Prostate gland (tissue), 2 donors: ENCODE measurements at regions of chr9 and their contacts with region 1.

Region 1: GRCh38 chr9:114155263-114155972 is at the start of gene COL27A1:
- DNase-seq: peak; percentile 78
- H3K4me3 ChIP-seq: peak within 1 kb of the TSS; percentile 49 to 50
- H3K27ac ChIP-seq: peak within 1 kb of the TSS; percentile 67 to 71
- H3K4me1 ChIP-seq: no peaks in the 10 kb centered on the region
- H3K27me3 ChIP-seq: no peaks in the 10 kb centered on the region
- CTCF ChIP-seq: peak; percentile 89 to 92 (median 90)
- POLR2A ChIP-seq: peak; percentile 31
- total RNA-seq, gene COL27A1: 8.7 to 54.8 TPM

Region 2: GRCh38 chr9:113906411-113907110 is 248.9 kb before region 1 on chr9:
- intact Hi-C with region 1: no loop called
- DNase-seq: peak; percentile 42
- H3K4me3 ChIP-seq: no peak overlapping the region
- H3K27ac ChIP-seq: no peak overlapping the region
- H3K4me1 ChIP-seq: peaks cover 4% of the 10 kb centered on the region
- H3K27me3 ChIP-seq: no peaks in the 10 kb centered on the region
- CTCF ChIP-seq: no peak
- POLR2A ChIP-seq: no peak

Region 3: DNA sequence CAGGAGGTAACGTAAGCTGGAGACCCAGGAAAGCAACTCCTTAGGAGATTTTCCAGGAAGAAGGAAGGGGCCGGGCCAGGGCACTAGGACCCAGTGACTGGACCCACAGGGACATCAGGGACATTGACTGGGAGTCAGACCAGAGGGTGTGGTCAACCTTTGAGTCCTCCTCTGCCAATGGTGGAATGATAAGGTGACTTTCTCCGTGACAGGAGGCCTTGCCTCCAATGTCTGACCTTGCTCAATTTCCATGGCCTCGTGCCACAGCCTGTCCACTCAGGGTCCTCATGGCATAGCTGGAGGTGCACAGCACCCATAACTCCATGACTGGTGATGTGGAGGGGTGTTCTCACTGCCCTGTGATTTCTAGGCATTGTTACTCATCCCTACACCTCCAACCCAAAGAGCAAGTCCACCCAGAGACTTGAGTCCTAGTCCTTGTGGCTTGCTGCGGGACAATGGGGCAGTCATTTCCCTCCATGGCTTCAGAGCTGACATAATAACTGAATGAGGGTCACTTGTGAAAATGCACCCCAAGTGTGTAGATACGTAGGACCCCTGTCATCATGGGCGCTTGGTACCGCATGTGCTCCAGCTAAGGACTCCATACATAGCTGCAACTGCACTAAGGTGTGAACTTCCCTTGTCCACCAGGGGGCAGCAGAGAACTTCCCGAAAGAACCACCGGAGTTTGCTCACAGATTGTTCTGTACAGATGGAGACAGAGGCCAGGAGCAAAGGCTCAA is 73.2 kb before region 1 on chr9:
- intact Hi-C with region 1: loop called (anchors 5 kb)
- DNase-seq: peak; percentile 93
- H3K4me3 ChIP-seq: no peak overlapping the region
- H3K27ac ChIP-seq: no peak overlapping the region
- H3K4me1 ChIP-seq: no peaks in the 10 kb centered on the region
- H3K27me3 ChIP-seq: no peaks in the 10 kb centered on the region
- CTCF ChIP-seq: peak; percentile 93 to 96 (median 94)
- POLR2A ChIP-seq: no peak

Region 4: GRCh38 chr9:114108016-114108833 is 47.2 kb before region 1 on chr9:
- intact Hi-C with region 1: loop called (anchors 5 kb)
- DNase-seq: peak; percentile 79
- H3K4me3 ChIP-seq: no peak overlapping the region
- H3K27ac ChIP-seq: no peak overlapping the region
- H3K4me1 ChIP-seq: no peaks in the 10 kb centered on the region
- H3K27me3 ChIP-seq: no peaks in the 10 kb centered on the region
- CTCF ChIP-seq: peak; percentile 84 to 98 (median 95)
- POLR2A ChIP-seq: no peak

Region 5: DNA sequence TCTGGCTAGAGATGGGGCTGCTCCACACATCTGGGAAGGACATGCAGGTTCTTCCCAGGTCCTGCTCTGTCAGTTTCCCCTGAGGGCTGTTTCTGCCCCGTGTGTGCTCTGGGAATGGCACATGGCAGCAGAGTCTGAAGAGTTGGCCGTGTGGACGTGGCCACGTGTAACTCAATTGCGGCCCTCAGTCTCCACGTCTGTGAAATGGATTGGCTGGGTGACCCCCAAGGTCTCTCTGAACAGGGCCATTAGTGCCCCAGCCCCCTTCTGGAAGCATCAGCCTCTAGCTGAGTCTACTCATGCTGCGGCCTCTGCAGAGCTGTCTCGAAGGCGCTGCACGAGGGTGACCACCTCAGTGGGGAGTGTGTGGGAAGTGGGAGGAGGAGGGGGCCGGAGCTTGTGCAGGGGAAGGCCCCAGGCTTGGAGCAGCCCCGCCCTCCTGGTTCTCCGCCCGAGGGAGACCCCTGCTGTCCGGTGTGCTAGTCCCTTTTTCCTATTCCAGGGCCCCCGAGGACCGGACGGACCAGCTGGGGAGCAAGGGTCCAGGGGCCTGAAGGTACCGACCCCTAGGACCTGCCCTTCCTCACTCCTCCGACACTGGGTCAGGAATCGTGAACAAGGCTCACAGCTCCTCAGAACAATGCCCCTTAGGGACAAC is 108.6 kb after region 1 on chr9:
- intact Hi-C with region 1: loop called (anchors 5 kb)
- DNase-seq: no peak
- H3K4me3 ChIP-seq: no peak overlapping the region
- H3K27ac ChIP-seq: no peak overlapping the region
- H3K4me1 ChIP-seq: no peaks in the 10 kb centered on the region
- H3K27me3 ChIP-seq: no peaks in the 10 kb centered on the region
- CTCF ChIP-seq: peak in 3 of 4 experiments; percentile 16 to 43 (median 24)
- POLR2A ChIP-seq: no peak